ENCODE measurements at regions of chr21 and their contacts with region 1.

Region 1: DNA sequence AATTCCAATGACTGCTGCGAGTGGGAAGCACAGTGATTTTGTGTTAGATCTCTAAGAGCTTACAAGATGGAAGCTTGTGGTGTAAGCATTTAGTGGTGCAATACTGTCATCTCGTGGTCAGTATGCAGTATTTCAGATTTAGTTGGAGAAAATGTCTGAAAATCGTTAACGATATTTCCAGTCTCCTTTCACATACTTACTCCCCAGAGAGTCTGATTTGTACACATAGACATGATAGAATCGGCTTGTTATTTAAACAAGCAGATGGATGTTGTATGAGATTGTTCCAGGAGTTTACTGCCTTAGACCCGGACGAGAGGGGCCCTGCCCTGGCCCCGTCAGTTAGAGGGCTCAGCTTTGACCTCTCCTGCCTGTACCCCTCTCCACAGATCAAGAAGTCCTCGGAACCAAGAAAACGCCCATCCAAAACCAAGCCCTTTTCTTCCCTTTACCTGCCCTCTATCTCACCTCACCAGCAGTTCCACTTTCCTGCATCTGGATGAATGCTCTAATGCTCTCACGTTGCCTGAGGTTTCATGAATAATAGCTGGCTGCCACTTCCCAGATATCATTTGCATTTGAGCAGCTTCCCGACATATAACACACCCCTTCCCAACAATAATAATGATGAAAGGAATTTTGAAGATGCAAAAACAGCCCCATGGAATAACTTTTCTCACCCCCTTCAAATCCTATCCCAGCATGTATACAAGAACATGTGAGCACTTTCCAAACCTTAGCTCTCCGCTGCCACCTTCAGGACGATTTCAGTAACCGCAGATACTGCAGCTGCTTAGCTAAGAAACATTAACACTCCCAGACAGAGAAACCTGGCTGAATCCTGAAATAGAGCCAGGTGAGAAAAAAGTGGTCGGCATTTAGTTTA is 247.3 kb downstream of the LTN1 start:
- DNase-seq: peak; percentile 75

Region 2: DNA sequence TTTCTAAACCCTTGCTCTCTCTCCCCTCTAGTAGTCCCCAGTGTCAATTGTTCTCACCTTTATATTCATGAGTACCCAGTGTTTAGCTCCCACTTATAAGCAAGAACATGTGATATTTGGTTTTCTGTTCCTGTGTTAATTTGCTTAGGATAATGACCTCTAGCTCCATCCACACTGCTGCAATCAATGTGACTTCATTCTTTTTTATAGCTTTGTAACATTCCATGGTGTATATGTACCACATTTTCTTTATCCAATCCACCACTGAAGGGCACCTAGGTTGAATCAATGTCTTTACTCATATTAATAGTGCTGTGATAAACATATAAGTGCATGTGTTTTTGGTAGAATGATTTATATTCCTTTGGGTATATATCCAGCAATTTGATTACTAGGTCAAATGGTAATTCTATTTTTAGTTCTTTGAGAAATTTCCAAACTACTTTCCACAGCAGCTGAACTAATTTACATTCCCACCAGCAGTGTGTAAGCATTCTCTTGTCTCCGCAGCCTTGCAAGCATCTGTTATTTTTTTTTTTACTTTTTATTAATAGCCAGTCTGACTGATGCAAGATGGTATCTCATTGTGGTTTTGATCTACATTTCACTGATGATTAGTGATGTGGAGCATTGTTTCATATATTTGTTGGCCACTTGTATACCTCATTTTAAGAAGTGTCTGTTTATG is 30.5 kb before region 1 on chr21:
- CTCF ChIA-PET with region 1: no interaction called
- POLR2A ChIA-PET with region 1: no interaction called
- DNase-seq: no peak

Region 3: DNA sequence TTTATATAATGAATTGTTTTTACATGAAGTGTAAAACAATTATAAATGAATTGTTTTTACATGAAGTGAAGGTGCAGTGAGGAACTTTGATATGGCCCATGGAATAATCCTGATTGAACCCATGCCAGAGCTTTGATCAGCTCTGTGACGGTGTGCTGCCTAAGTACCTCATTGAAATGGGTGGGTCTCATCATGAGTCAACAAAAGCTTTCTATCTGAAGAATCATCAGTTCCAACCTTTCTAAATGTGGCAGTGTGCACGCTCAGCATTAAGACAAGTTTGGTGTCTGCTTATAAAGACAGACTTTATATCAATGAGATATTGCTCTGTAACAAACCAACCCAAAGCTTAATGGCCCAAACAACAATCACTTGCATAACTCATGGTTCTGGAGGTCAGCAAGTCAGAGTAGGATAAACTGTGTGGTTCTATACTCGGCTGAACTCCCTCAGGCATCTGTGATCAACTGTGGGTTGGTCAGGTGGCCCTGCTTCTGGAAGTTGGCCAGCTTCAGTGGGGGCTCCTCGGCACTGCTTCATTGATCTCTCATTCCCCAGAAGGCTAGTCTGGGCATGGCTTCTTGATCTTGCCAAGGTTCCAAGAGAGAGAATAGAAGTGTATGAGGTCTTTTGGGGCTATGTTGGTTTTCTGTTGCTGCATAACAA is 10.7 kb before region 1 on chr21:
- CTCF ChIA-PET with region 1: interaction called, 17 read pairs
- POLR2A ChIA-PET with region 1: no interaction called
- DNase-seq: no peak

Region 4: GRCh38 chr21:28818663-28819278 is 73.4 kb after region 1 on chr21:
- CTCF ChIA-PET with region 1: no interaction called
- POLR2A ChIA-PET with region 1: no interaction called
- DNase-seq: no peak

Region 5: GRCh38 chr21:28938726-28939125 is 193.4 kb after region 1 on chr21:
- CTCF ChIA-PET with region 1: interaction called, 13 read pairs
- POLR2A ChIA-PET with region 1: no interaction called
- DNase-seq: no peak

Measured in HEK293T (cell line).